ENCODE measurements at regions of chr10 and their contacts with region 1.

Region 1: DNA sequence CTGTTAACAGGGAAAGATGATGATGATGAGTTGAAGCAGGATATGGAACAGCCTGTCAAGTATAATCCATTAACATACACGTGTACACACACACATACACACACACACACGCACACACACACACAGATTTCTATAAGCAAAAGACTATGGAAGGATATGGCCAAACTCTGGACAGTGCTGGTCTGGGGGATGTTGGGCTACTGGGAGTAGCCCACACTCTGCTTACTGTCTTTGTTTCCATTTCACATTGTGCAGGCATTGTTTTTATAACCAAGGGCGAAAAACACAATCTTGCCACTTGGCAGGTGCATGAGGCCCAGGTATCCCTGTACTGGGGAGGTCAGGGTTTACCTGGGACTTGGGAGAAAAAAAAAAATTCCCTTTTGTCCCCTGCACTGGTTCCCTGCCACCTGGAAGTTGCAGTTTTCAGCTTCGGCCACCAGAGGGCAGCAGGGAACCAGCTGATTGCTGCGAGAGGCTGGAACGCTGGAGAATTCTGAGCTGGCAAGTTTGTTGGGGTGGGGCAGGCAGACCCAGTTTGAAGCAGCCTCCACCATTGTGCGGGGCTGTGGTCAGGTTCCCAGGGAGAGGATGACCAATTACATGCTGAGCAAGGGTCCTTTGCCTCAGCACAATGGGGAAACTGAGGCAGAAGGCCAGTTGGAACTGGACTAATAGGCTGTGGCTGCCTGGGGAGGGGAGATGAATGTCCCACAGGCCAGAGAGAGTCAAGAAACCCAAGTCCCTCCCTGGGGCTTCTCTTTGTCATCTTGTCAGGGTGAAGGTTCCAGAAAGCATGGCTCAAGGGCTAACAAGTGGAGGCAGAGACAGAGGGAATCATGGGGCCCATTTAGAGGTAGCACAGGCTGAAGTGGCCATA is 27.3 kb downstream of the PPIF start:
- DNase-seq: peak; percentile 60 to 75 (median 71)
- H3K4me3 ChIP-seq: no peak overlapping the region
- H3K4me3 Mint-ChIP-seq: no peak overlapping the region
- H3K27ac ChIP-seq: no peak overlapping the region
- H3K27ac Mint-ChIP-seq: peak overlapping the region in 1 of 7 donors; percentile 8
- H3K4me1 ChIP-seq: no peaks in the 10 kb centered on the region
- H3K4me1 Mint-ChIP-seq: peaks cover 5% of the 10 kb centered on the region
- H3K27me3 ChIP-seq: no peaks in the 10 kb centered on the region
- H3K27me3 Mint-ChIP-seq: peaks cover 0 to 1% (median 1%) of the 10 kb centered on the region in 3 donors
- CTCF ChIP-seq: peak; percentile 99

Region 2: DNA sequence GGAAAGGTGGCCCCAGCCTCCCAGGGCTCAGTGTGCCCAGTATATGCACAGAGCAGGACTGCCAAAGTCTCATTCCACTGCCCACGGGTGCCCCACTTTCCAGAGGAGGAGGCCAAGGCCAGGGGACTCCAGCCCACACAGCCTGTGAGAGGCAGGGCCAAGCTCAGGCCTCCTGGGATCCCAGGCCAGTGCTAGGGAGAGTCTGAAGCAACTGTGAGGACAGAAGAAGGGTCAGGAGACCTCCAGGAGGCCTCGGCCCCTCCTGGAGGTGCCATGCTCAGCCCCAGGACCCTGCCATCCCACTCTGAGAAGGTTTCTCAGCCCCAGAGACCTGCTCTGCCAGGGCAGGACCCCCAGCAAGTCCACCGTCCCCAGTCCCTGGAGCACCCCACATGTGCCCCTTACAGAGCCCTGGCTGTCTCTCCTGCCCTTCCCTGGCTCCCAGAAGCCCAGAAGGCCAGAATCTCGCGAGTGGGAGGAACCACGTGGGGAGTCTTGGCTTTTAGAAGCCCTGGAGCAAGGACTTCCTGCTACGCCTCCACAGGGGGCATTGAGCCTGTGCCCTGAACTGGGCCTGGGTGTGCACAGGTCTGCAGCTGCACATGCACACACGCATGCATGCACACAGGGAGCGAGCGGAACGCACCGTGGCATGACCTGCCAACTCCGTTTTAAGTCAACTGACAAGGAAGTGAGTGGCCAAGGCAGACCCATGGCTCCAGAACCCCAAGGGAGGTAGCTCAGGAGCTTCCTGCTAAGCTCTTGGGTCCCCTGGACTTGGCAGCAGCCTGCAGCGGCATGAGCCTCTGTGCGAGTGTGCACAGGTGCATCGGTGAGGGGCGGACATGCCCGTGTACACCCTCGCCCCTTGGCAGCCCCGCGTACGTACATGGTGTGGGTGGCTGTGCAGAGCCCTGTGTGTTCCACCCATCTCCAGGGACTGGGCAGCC is 37.3 kb after region 1 on chr10:
- intact Hi-C with region 1: no loop called
- DNase-seq: no peak
- H3K4me3 ChIP-seq: no peak overlapping the region
- H3K4me3 Mint-ChIP-seq: no peak overlapping the region
- H3K27ac ChIP-seq: no peak overlapping the region
- H3K27ac Mint-ChIP-seq: peak overlapping the region in 1 of 7 donors; percentile 76
- H3K4me1 ChIP-seq: peaks cover 0 to 22% of the 10 kb centered on the region in 2 donors
- H3K4me1 Mint-ChIP-seq: peaks cover 25% of the 10 kb centered on the region
- H3K27me3 ChIP-seq: no peaks in the 10 kb centered on the region
- H3K27me3 Mint-ChIP-seq: peaks cover 7 to 21% (median 7%) of the 10 kb centered on the region in 3 donors
- CTCF ChIP-seq: no peak

Region 3: DNA sequence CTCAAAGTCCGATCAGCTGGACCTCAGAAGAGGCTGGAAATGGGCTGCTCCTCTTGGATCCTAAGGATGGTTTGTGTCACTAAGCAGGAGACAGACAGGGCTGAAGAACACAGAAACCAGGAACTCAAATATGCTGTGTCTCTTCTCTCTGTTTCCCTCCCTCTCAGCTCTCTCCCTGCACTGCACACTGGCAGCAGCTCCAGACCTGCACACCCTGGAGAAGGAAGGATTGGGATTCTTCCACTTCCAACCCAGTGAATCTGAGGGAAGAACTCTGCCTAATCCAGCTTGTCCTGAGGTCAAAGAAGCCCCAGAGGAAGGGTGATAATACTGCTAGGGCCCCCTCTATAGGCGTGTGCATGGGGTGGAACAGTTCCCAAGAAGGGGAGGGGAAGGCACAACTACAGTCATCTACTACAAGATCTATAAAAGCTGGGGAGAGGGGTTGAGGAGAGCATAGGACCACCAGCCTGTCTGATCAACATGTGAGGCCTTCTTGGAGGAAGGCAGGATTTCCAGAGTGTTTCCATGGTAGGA is 93.5 kb after region 1 on chr10:
- intact Hi-C with region 1: loop called in 1 of 2 experiments (anchors 5 kb)
- DNase-seq: no peak
- H3K4me3 ChIP-seq: peak overlapping the region in 1 of 3 experiments; percentile 58
- H3K4me3 Mint-ChIP-seq: peak overlapping the region; percentile 50 to 85
- H3K27ac ChIP-seq: peak overlapping the region; percentile 61 to 72
- H3K27ac Mint-ChIP-seq: peak overlapping the region; percentile 68 to 93 (median 92)
- H3K4me1 ChIP-seq: peaks cover 23 to 24% of the 10 kb centered on the region in 2 donors
- H3K4me1 Mint-ChIP-seq: peaks cover 26% of the 10 kb centered on the region
- H3K27me3 ChIP-seq: no peaks in the 10 kb centered on the region
- H3K27me3 Mint-ChIP-seq: peaks cover 2 to 8% (median 3%) of the 10 kb centered on the region in 3 donors
- CTCF ChIP-seq: no peak

Region 4: GRCh38 chr10:79487296-79488194 is 113.0 kb after region 1 on chr10:
- intact Hi-C with region 1: loop called (anchors 5 kb)
- DNase-seq: peak; percentile 25 to 60 (median 57)
- H3K4me3 ChIP-seq: no peak overlapping the region
- H3K4me3 Mint-ChIP-seq: no peak overlapping the region
- H3K27ac ChIP-seq: no peak overlapping the region
- H3K27ac Mint-ChIP-seq: no peak overlapping the region
- H3K4me1 ChIP-seq: no peaks in the 10 kb centered on the region
- H3K4me1 Mint-ChIP-seq: peaks cover 6% of the 10 kb centered on the region
- H3K27me3 ChIP-seq: no peaks in the 10 kb centered on the region
- H3K27me3 Mint-ChIP-seq: peaks cover 1 to 7% (median 2%) of the 10 kb centered on the region in 3 donors
- CTCF ChIP-seq: peak; percentile 86

Measured in CD14-positive monocyte (primary cell).